Activated CD4-positive, alpha-beta T cell treated with anti-CD3 and anti-CD28 coated beads for 36 hours (primary cell): ENCODE measurements at regions of chr22 and their contacts with region 1.

Region 1: GRCh38 chr22:19503869-19504268 is 20.3 kb downstream of the CLDN5 start:
- DNase-seq: no peak
- ATAC-seq: no peak
- H3K4me3 Mint-ChIP-seq: no peak overlapping the region
- H3K27ac Mint-ChIP-seq: no peak overlapping the region
- H3K4me1 Mint-ChIP-seq: peaks cover 19% of the 10 kb centered on the region
- H3K27me3 Mint-ChIP-seq: no peaks in the 10 kb centered on the region

Region 2: DNA sequence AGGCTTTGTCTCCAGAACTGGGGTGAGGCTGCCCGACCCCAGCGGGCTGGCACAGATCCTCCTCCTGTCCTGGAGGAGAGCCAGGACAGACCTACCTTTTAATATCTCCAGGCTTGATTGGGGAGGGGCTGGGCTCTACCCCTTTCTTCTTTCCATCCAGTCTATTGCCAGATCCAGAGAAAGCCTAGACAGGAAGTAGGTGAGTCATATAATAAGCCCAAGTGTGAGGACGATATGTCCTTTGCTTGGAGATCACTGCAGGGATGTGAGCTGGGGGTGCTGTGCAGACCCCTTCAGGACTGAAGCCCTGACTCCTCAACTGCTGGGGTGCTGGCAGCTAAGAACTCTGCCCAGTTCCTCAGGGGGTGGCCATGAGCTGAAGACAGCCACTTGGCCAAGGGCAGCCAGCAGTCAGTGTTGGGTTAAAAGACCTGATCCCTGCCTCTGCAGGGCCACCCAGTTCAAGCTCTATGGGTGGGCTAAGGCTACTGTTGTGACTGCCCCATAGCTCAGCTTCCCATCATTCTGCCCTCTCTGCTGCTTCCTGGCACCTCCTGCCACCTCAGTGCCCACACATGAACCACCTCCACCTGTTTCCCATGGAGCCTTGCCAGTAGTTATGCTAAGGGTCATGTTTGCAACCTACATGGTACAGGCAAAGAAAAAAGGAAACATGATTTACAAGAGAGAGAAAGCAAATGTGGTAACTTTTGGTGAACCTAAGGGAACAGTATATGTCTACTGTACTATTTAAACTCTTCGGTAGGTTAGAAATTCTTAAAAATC is 48.1 kb before region 1 on chr22:
- CTCF ChIA-PET with region 1: no interaction called
- POLR2A ChIA-PET with region 1: no interaction called
- intact Hi-C with region 1: loop called in 1 of 2 experiments (anchors 10 kb)
- DNase-seq: no peak
- ATAC-seq: no peak
- H3K4me3 Mint-ChIP-seq: no peak overlapping the region
- H3K27ac Mint-ChIP-seq: no peak overlapping the region
- H3K4me1 Mint-ChIP-seq: peaks cover 5% of the 10 kb centered on the region
- H3K27me3 Mint-ChIP-seq: no peaks in the 10 kb centered on the region

Region 3: GRCh38 chr22:19641254-19641982 is 137.5 kb after region 1 on chr22:
- CTCF ChIA-PET with region 1: no interaction called
- POLR2A ChIA-PET with region 1: no interaction called
- intact Hi-C with region 1: no loop called
- DNase-seq: no peak
- ATAC-seq: no peak
- H3K4me3 Mint-ChIP-seq: no peak overlapping the region
- H3K27ac Mint-ChIP-seq: no peak overlapping the region
- H3K4me1 Mint-ChIP-seq: no peaks in the 10 kb centered on the region
- H3K27me3 Mint-ChIP-seq: peaks cover 7% of the 10 kb centered on the region